ENCODE measurements at regions of chr14 and their contacts with region 1.

Region 1: DNA sequence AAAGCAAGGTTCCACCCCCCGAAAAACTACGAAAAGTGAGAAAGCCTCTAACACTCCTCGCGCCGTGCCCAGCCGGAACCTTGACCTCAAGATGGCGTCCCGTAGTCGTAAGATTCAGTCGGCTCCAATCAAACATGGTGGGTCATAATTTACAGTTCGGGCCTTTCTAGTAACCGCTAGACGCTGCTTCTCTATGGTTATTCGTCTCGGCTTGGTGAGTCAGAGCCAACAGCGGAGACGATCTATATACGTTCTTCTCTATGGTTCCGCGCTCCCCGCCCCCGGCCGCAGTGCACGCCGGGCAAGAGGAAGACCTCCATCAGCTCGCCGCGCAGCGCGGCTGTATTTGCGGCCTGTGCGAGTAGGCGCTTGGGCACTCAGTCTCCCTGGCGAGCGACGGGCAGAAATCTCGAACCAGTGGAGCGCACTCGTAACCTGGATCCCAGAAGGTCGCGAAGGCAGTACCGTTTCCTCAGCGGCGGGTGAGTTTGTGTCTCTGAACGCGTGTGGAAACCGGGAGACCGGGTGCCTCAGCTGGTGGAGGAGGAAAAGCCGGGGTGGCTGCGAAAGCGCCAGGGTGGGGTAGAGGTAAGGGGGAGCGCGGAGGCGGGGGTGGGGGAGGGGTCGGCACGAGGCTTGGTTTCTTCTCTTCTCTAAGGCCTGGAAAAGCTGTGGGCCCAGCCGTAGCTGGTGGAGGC is at the start of gene RBM25:
- H3K4me3 Mint-ChIP-seq: no peak within 1 kb of the TSS
- H3K27ac Mint-ChIP-seq: no peak within 1 kb of the TSS
- H3K4me1 Mint-ChIP-seq: peaks cover 13% of the 10 kb centered on the region
- H3K27me3 Mint-ChIP-seq: no peaks in the 10 kb centered on the region

Region 2: GRCh38 chr14:73026845-73027542 is 31.4 kb before region 1 on chr14 and contains the start of gene ZFYVE1:
- intact Hi-C with region 1: loop called (anchors 1 kb)
- H3K4me3 Mint-ChIP-seq: peak within 1 kb of the TSS; percentile 94
- H3K27ac Mint-ChIP-seq: peak within 1 kb of the TSS; percentile 91
- H3K4me1 Mint-ChIP-seq: peaks cover 42% of the 10 kb centered on the region
- H3K27me3 Mint-ChIP-seq: no peaks in the 10 kb centered on the region

Region 3: DNA sequence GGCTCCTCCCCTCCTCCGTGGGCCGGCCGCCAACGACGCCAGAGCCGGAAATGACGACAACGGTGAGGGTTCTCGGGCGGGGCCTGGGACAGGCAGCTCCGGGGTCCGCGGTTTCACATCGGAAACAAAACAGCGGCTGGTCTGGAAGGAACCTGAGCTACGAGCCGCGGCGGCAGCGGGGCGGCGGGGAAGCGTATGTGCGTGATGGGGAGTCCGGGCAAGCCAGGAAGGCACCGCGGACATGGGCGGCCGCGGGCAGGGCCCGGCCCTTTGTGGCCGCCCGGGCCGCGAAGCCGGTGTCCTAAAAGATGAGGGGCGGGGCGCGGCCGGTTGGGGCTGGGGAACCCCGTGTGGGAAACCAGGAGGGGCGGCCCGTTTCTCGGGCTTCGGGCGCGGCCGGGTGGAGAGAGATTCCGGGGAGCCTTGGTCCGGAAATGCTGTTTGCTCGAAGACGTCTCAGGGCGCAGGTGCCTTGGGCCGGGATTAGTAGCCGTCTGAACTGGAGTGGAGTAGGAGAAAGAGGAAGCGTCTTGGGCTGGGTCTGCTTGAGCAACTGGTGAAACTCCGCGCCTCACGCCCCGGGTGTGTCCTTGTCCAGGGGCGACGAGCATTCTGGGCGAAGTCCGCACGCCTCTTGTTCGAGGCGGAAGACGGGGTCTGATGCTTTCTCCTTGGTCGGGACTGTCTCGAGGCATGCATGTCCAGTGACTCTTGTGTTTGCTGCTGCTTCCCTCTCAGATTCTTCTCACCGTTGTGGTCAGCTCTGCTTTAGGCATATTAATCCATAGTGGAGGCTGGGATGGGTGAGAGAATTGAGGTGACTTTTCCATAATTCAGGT is 78.2 kb after region 1 on chr14 and contains the start of gene PSEN1:
- intact Hi-C with region 1: loop called (anchors 2 kb)
- H3K4me3 Mint-ChIP-seq: peak within 1 kb of the TSS; percentile 89
- H3K27ac Mint-ChIP-seq: peak within 1 kb of the TSS; percentile 100
- H3K4me1 Mint-ChIP-seq: peaks cover 21% of the 10 kb centered on the region
- H3K27me3 Mint-ChIP-seq: no peaks in the 10 kb centered on the region

Region 4: GRCh38 chr14:73472185-73473114 is 414.1 kb after region 1 on chr14:
- intact Hi-C with region 1: no loop called
- H3K4me3 Mint-ChIP-seq: no peak overlapping the region
- H3K27ac Mint-ChIP-seq: no peak overlapping the region
- H3K4me1 Mint-ChIP-seq: peaks cover 33% of the 10 kb centered on the region
- H3K27me3 Mint-ChIP-seq: peaks cover 16% of the 10 kb centered on the region